ENCODE measurements at regions of chr6 and their contacts with region 1.

Region 1: DNA sequence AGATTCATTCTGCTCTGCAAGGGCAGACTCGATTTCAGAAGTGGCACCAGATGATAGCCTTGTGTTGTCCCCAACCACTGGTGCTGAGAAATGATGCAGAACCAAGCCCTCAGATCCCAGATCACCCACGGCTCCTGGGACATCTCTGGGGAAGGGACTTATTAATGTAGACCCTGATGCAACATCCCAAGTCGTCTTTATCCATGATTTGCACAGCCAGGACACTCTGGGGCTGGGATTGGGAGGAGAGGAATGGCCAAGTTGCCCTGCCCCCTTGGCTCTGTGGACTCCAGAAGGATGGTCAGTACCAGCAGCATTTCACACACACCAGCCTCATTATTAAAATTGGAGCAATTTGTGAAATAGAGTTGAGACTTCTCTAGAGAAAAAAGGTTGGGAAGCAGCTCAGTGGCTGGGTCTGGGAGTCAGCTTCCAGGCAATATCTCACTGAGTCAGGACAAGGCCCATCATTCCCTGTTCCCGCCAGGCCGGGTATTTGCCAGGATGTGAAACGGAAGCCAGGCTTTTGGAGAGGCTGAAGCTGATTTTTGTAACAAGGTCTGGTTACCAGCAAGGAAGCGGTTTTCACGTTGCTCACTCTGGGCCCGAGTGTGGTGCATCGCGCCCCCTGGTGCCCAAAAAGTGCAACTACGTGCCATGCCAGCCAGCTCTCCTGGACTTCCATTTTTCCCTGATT is 67.4 kb downstream of the ZBTB2 start:
- DNase-seq: peak; percentile 57 to 93 (median 84)
- ATAC-seq: peak; percentile 87 to 95 (median 92)
- H3K4me3 ChIP-seq: no peak overlapping the region
- H3K27ac ChIP-seq: no peak overlapping the region
- H3K4me1 ChIP-seq: peaks cover 4 to 9% (median 4%) of the 10 kb centered on the region in 3 donors
- H3K27me3 ChIP-seq: no peaks in the 10 kb centered on the region
- CTCF ChIP-seq: peak; percentile 91 to 96 (median 94)

Region 2: GRCh38 chr6:151004415-151005024 is 319.4 kb before region 1 on chr6:
- intact Hi-C with region 1: loop called in 1 of 3 experiments (anchors 10 kb)
- DNase-seq: no peak
- ATAC-seq: peak; percentile 88 to 93 (median 92)
- H3K4me3 ChIP-seq: no peak overlapping the region
- H3K27ac ChIP-seq: peak overlapping the region in 2 of 4 donors; percentile 44 to 68
- H3K4me1 ChIP-seq: peaks cover 0 to 14% (median 11%) of the 10 kb centered on the region in 3 donors
- H3K27me3 ChIP-seq: no peaks in the 10 kb centered on the region
- CTCF ChIP-seq: no peak

Region 3: DNA sequence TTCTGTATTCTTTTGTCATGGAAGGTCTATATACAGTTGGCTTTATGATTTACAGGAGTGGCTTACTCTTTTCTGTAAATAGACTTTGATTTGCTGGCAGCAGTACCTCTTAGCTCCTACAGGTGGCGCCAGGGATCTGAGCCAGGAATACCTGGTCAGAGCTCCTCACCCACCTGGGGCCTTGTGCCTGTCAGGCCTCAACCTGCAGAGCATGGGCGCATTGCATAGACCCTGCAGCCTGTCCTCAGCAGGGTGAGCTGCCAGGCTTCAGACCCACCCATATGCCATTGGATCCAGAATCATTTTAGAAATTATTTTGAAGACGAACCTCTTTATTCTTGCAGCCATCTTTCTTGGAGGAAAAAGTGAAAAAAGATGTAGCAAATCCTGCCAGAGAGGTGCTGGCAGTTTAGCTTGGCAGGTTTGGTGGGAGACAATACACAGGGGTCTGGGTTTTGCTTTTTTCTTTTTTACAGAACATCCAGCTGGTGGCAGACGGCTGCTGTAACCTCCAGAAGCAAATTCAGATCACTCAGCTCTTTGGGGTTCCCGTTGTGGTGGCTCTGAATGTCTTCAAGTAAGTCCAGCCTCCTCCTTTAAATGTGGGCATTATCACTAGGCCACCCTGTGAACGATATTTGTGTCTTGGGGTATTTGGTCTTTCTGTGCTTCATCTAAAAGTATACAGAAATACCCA is 309.4 kb before region 1 on chr6:
- intact Hi-C with region 1: loop called (anchors 5 to 10 kb)
- DNase-seq: peak; percentile 61 to 90 (median 78)
- ATAC-seq: peak; percentile 70 to 96 (median 90)
- H3K4me3 ChIP-seq: no peak overlapping the region
- H3K27ac ChIP-seq: no peak overlapping the region
- H3K4me1 ChIP-seq: peaks cover 2 to 16% (median 10%) of the 10 kb centered on the region in 3 donors
- H3K27me3 ChIP-seq: no peaks in the 10 kb centered on the region
- CTCF ChIP-seq: peak; percentile 94 to 99 (median 96)

Region 4: GRCh38 chr6:151067684-151068596 is 256.0 kb before region 1 on chr6:
- intact Hi-C with region 1: no loop called
- DNase-seq: peak in 2 of 6 donors; percentile 22 to 47
- ATAC-seq: peak in 3 of 4 donors; percentile 56 to 79 (median 62)
- H3K4me3 ChIP-seq: no peak overlapping the region
- H3K27ac ChIP-seq: peak overlapping the region in 3 of 4 donors; percentile 4 to 43 (median 6)
- H3K4me1 ChIP-seq: peaks cover 9 to 16% (median 15%) of the 10 kb centered on the region in 3 donors
- H3K27me3 ChIP-seq: no peaks in the 10 kb centered on the region
- CTCF ChIP-seq: no peak